ENCODE measurements at regions of chr10 and their contacts with region 1.

Region 1: DNA sequence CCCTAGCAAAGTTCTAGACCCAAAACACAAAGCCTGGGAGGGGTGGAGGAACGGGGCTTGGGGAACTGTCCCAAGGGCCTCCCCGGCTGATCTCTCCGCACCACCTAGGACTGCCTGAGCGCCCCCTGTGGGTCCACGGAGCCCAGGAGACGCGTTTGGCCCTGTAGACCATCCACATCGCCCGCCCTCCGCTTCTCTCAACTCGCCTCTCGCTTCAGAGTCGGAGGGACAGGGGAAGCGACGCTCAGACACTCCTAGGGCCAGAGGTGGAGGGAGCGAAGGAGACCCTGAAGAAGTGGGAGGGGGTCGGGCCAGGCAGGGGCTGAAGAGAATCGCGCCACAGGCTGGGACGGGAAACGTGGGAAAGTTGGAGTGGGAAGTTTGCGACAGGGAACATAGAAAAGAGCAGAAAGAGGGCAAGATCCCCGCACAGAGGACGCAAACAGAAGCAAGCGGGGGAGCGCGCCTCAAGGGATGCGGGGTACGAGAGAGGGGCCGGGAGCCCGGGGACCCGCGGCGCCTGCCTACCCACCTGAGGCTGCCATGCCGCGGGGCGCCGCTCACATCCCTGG is 378 bp downstream of the PIK3AP1 start:
- DNase-seq: peak; percentile 72 to 73
- ATAC-seq: peak; percentile 55 to 74 (median 58)
- H3K4me3 ChIP-seq: peak overlapping the region; percentile 73
- H3K4me3 Mint-ChIP-seq: peak overlapping the region; percentile 99
- H3K27ac ChIP-seq: peak overlapping the region; percentile 88
- H3K27ac Mint-ChIP-seq: peak overlapping the region; percentile 97
- H3K4me1 ChIP-seq: peaks cover 44% of the 10 kb centered on the region
- H3K4me1 Mint-ChIP-seq: peaks cover 61 to 62% of the 10 kb centered on the region in 2 donors
- H3K27me3 ChIP-seq: no peaks in the 10 kb centered on the region
- H3K27me3 Mint-ChIP-seq: no peaks in the 10 kb centered on the region
- CTCF ChIP-seq: peak; percentile 71

Region 2: DNA sequence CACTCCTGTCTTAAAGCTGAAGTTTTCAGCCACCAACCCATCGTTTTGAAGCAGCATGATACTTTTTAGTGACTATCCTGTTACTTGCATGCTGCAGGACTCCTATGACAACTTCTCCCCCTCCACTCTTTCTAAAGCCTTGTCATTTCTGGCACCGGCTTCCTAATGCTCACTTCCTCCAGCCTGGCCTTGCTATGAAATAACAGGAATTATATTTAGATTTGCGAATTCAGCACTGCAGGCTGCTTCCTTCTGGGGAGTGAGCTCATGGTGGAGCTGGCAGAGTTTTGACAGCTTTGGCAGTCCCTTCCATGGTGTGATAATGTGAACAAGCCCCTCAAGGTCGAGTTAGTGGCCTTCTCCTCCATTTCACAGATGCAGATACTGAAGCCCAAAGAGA is 462.0 kb before region 1 on chr10:
- intact Hi-C with region 1: no loop called
- DNase-seq: no peak
- ATAC-seq: no peak
- H3K4me3 ChIP-seq: no peak overlapping the region
- H3K4me3 Mint-ChIP-seq: no peak overlapping the region
- H3K27ac ChIP-seq: no peak overlapping the region
- H3K27ac Mint-ChIP-seq: no peak overlapping the region
- H3K4me1 ChIP-seq: peaks cover 6% of the 10 kb centered on the region
- H3K4me1 Mint-ChIP-seq: no peaks in the 10 kb centered on the region
- H3K27me3 ChIP-seq: no peaks in the 10 kb centered on the region
- H3K27me3 Mint-ChIP-seq: peaks cover 0 to 2% of the 10 kb centered on the region in 2 donors
- CTCF ChIP-seq: no peak

Region 3: DNA sequence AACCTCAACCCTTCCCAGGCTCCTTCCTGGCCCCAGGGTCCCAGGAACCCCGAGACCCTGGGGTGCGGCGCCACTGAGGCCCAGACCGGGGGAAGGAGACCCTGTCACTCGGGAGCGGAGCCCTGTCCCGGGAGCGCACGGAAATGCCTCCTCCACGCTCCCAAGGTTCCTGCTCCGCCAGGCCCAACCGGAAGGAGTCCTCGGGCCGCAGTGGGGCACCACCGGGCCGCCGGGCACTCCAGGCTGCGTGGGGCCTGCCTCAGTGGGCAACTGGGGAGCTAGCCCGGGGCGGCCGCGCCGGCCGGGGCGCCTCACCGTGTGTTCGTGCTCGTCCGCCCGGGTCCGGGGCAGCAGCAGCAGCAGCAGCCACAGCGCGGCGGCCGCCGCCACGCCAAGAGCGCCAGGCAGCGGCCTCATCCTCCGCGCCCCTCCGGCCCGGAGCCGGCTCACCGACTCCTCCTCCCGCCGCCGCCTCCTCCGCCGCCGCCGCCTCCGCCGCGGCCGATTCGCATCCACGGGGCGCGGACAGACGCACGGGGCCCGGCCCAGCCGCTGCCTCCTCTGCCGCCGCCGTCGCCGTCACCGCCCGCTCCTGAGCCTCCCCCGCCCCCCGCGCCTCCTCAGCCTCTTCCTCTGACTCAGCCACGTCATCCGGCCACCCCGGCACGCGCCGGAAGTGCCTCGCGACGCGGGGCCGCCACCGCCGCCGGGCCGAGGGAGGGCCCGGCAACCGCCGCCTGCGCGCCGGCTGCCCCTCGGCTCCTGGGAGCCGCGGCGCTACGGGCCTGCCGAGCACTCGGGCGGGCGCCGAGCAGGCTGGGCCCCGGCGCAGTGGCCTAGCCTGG is 133.3 kb before region 1 on chr10 and contains the start of gene TM9SF3:
- intact Hi-C with region 1: loop called (anchors 1 kb)
- DNase-seq: peak; percentile 90 to 96
- ATAC-seq: peak; percentile 82 to 95 (median 88)
- H3K4me3 ChIP-seq: peak within 1 kb of the TSS; percentile 96
- H3K4me3 Mint-ChIP-seq: peak within 1 kb of the TSS; percentile 97
- H3K27ac ChIP-seq: peak within 1 kb of the TSS; percentile 99
- H3K27ac Mint-ChIP-seq: peak within 1 kb of the TSS in 1 of 2 donors; percentile 97
- H3K4me1 ChIP-seq: peaks cover 21% of the 10 kb centered on the region
- H3K4me1 Mint-ChIP-seq: peaks cover 31 to 39% of the 10 kb centered on the region in 2 donors
- H3K27me3 ChIP-seq: no peaks in the 10 kb centered on the region
- H3K27me3 Mint-ChIP-seq: no peaks in the 10 kb centered on the region
- CTCF ChIP-seq: no peak
- total RNA-seq, gene TM9SF3: 113 to 119 (median 117) TPM

Region 4: DNA sequence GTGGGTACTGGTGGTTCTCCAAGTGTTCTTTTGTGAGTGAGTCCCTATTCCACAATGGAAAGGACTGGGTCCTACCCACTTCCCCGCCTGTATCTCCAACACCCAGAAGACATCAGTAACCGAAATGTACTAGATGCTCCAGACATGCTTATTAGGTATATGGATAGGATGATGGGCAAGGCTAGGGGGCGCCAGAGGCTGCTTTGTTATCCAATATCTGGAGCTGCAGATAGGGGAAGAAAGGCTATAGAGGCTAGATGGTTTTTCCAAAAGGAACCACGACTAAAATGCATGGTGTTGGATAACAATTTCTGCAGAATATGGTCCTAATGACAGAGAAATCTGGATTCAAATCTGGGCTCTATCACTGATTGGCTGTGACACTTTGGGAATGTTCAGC is 77.0 kb before region 1 on chr10:
- intact Hi-C with region 1: loop called (anchors 1 kb)
- DNase-seq: peak; percentile 72 to 75
- ATAC-seq: peak; percentile 71 to 77 (median 74)
- H3K4me3 ChIP-seq: no peak overlapping the region
- H3K4me3 Mint-ChIP-seq: no peak overlapping the region
- H3K27ac ChIP-seq: no peak overlapping the region
- H3K27ac Mint-ChIP-seq: peak overlapping the region in 1 of 2 donors; percentile 36
- H3K4me1 ChIP-seq: peaks cover 18% of the 10 kb centered on the region
- H3K4me1 Mint-ChIP-seq: peaks cover 36 to 39% of the 10 kb centered on the region in 2 donors
- H3K27me3 ChIP-seq: no peaks in the 10 kb centered on the region
- H3K27me3 Mint-ChIP-seq: no peaks in the 10 kb centered on the region
- CTCF ChIP-seq: peak; percentile 74

Region 5: DNA sequence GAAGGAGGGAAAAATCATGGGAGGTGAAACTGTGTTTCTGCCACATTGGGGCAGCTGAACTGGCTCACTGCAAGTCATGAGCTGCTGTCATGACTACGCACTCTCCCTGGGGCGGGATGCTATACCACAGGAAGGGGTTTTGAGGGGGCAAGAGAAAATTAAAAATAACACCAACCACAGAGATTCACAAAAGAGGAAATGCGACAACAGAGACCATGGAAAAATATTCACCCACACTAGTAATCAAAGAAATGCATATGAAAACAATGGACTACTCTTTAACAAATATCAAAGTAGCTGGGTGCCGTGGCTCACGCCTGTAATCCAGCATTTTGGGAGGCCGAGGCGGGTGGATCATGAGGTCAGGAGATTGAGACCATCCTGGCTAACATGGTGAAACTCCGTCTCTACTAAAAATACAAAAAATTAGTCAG is 67.9 kb before region 1 on chr10:
- intact Hi-C with region 1: loop called (anchors 2 kb)
- DNase-seq: peak; percentile 58 to 74
- ATAC-seq: peak; percentile 78 to 88 (median 87)
- H3K4me3 ChIP-seq: no peak overlapping the region
- H3K4me3 Mint-ChIP-seq: peak overlapping the region; percentile 69
- H3K27ac ChIP-seq: peak overlapping the region; percentile 83
- H3K27ac Mint-ChIP-seq: peak overlapping the region; percentile 90 to 93
- H3K4me1 ChIP-seq: peaks cover 79% of the 10 kb centered on the region
- H3K4me1 Mint-ChIP-seq: peaks cover 72 to 78% of the 10 kb centered on the region in 2 donors
- H3K27me3 ChIP-seq: no peaks in the 10 kb centered on the region
- H3K27me3 Mint-ChIP-seq: no peaks in the 10 kb centered on the region
- CTCF ChIP-seq: no peak

Region 6: DNA sequence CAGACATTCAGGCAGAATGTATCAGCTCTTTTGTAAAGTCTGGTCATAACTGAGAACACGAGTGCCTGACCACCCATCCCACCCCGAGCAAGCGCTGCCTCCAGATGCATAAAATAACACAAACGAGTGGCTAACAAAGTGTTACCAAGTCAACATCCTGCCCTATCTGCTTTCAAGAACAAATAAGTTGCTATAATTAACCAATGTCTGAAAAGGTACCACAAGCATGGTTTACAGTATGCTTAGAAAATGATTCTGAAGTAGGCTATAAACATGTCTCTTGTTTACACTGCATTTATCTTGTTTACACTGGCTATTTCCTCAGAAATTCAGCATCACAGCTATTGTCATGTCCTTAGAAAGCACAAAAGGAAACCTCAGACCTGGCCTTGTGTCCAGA is 49.1 kb before region 1 on chr10:
- intact Hi-C with region 1: loop called (anchors 1 kb)
- DNase-seq: peak; percentile 57 to 59
- ATAC-seq: peak; percentile 54 to 81 (median 78)
- H3K4me3 ChIP-seq: no peak overlapping the region
- H3K4me3 Mint-ChIP-seq: peak overlapping the region; percentile 85
- H3K27ac ChIP-seq: peak overlapping the region; percentile 94
- H3K27ac Mint-ChIP-seq: peak overlapping the region; percentile 98 to 99
- H3K4me1 ChIP-seq: peaks cover 79% of the 10 kb centered on the region
- H3K4me1 Mint-ChIP-seq: peaks cover 70 to 77% of the 10 kb centered on the region in 2 donors
- H3K27me3 ChIP-seq: no peaks in the 10 kb centered on the region
- H3K27me3 Mint-ChIP-seq: no peaks in the 10 kb centered on the region
- CTCF ChIP-seq: no peak

Region 7: GRCh38 chr10:96690755-96691731 is 28.9 kb before region 1 on chr10:
- intact Hi-C with region 1: loop called (anchors 1 kb)
- DNase-seq: peak in 1 of 2 donors; percentile 30
- ATAC-seq: no peak
- H3K4me3 ChIP-seq: no peak overlapping the region
- H3K4me3 Mint-ChIP-seq: peak overlapping the region; percentile 2
- H3K27ac ChIP-seq: no peak overlapping the region
- H3K27ac Mint-ChIP-seq: peak overlapping the region; percentile 56 to 98
- H3K4me1 ChIP-seq: peaks cover 61% of the 10 kb centered on the region
- H3K4me1 Mint-ChIP-seq: peaks cover 80 to 84% of the 10 kb centered on the region in 2 donors
- H3K27me3 ChIP-seq: no peaks in the 10 kb centered on the region
- H3K27me3 Mint-ChIP-seq: no peaks in the 10 kb centered on the region
- CTCF ChIP-seq: peak; percentile 13

Region 8: DNA sequence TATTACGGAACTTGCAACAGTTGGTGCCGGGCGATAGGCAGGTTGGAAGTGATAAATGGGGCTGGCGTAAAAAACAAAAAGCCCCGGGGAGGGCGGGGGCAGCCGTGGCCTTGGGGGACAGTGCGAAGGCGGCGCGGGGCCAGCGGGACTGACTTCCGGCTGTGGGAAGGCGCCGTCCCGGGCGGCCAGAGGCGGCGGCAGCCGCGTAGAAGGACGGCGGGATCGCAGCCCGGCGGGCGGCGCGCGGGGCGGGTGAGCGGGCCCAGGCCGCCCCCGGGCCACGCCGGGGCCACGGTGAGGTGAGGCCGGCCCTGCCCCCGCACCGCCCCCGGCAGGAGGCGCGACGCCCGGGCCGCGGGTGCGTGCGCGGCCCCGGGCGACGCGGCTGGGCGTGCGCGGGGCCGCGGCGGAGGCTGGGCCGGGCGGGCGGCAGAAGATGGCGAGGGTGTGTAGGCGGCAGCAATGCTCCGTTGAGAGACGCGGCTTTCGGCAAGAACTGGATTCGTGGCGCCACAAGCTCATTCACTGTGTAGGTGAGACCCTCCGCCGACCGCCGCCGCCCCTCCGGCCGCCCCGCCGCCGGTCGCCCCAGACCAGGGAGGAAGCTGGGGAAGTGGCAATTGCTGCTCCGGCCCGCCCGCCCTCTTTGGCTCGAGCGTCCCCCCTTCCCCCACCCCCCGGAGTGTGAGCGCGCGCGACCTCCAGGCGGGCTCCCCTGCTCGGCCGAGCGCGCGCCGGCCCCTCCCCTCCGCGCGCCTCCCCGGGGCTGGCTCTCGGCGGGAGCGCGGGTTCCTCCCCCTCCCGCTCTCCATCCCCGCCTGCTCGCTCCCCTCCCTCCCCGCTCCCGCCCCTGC is 112.2 kb after region 1 on chr10 and contains the start of gene LCOR:
- intact Hi-C with region 1: loop called (anchors 2 kb)
- DNase-seq: peak; percentile 82 to 92
- ATAC-seq: peak; percentile 69 to 86 (median 72)
- H3K4me3 ChIP-seq: peak within 1 kb of the TSS; percentile 73
- H3K4me3 Mint-ChIP-seq: peak within 1 kb of the TSS; percentile 98
- H3K27ac ChIP-seq: peak within 1 kb of the TSS; percentile 84
- H3K27ac Mint-ChIP-seq: peak within 1 kb of the TSS; percentile 99
- H3K4me1 ChIP-seq: peaks cover 14% of the 10 kb centered on the region
- H3K4me1 Mint-ChIP-seq: peaks cover 45% of the 10 kb centered on the region in 2 donors
- H3K27me3 ChIP-seq: no peaks in the 10 kb centered on the region
- H3K27me3 Mint-ChIP-seq: no peaks in the 10 kb centered on the region
- CTCF ChIP-seq: no peak
- total RNA-seq, gene LCOR: 68.5 to 92.4 (median 87.7) TPM